GM10248 (cell line): ENCODE measurements at regions of chr5 and their contacts with region 1.

Region 1: GRCh38 chr5:134446938-134447337 is 35.3 kb upstream of the CDKN2AIPNL start:
- DNase-seq: peak; percentile 48
- CTCF ChIP-seq: no peak

Region 2: GRCh38 chr5:134394932-134395331 is 52.0 kb before region 1 on chr5:
- CTCF ChIA-PET with region 1: no interaction called
- POLR2A ChIA-PET with region 1: no interaction called
- DNase-seq: no peak
- CTCF ChIP-seq: no peak

Region 3: GRCh38 chr5:134458234-134459012 is 11.5 kb after region 1 on chr5:
- CTCF ChIA-PET with region 1: interaction called, 11 read pairs
- POLR2A ChIA-PET with region 1: no interaction called
- DNase-seq: no peak
- CTCF ChIP-seq: no peak

Region 4: DNA sequence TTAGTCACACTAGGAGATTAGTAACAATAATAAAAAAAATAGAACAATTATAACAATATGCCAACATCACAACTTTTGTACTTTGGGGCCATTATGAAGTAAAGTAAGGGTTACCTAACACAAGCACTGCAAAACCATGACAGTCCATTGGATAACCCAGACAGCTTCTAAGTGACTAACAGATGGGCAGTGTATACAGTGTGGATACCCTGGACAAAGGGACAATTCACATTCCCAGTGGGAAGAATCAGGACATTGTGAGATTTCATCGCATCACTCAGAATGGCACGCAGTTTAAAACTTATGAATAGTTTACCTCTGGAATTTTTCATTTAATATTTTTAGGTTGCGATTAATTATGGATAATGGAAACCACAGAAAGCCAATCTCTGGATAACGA is 32.9 kb after region 1 on chr5:
- CTCF ChIA-PET with region 1: no interaction called
- POLR2A ChIA-PET with region 1: no interaction called
- DNase-seq: no peak
- CTCF ChIP-seq: no peak

Region 5: GRCh38 chr5:134568761-134569695 is 122.1 kb after region 1 on chr5:
- CTCF ChIA-PET with region 1: no interaction called
- POLR2A ChIA-PET with region 1: no interaction called
- DNase-seq: no peak
- CTCF ChIP-seq: no peak